H1 (cell line): ENCODE measurements at regions of chr14 and their contacts with region 1.

Region 1: GRCh38 chr14:94548999-94549985 is 11.9 kb upstream of the SERPINA4 start:
- DNase-seq: peak; percentile 80 to 98
- H3K4me3 ChIP-seq: no peak overlapping the region
- H3K27ac ChIP-seq: no peak overlapping the region
- H3K4me1 ChIP-seq: peaks cover 0 to 8% (median 5%) of the 10 kb centered on the region in 4 experiments
- H3K27me3 ChIP-seq: no peaks in the 10 kb centered on the region
- CTCF ChIP-seq: peak; percentile 78 to 90 (median 86)
- EP300 ChIP-seq: no peak
- POLR2A ChIP-seq: no peak
- RAD21 ChIP-seq: peak; percentile 85 to 90

Region 2: DNA sequence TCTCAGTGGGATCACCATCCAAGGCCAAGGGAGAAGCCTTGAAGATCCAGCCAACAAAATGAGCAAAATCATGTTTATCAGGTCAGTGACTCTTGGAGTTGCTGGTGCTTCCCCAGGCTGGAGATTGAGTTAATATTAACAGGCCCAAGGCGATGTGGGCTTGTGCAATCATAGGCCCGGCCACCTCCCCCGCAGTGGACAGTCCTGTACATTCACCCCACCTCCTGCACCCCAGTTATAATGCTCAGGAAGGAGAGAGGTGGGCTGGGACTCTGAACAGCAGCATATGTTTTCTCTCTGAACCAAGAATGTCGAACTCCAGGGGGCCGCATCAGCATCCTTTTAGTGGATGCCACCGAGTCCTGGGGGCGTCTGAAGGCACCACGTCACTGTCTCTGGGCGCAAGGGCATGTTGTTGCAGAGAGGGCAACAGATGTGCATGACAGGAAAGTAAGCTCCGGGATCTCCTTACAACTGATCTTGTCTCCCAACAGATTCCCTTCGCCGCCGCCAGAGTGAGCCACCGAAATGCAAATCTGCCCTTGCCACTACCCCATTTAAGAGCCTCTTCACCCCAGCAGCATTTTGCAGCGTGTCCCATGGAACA is 194.0 kb before region 1 on chr14:
- CTCF ChIA-PET with region 1: interaction called, 14 read pairs
- POLR2A ChIA-PET with region 1: no interaction called
- DNase-seq: peak; percentile 56 to 61
- H3K4me3 ChIP-seq: no peak overlapping the region
- H3K27ac ChIP-seq: no peak overlapping the region
- H3K4me1 ChIP-seq: peaks cover 0 to 8% (median 3%) of the 10 kb centered on the region in 4 experiments; a peak in 1 of 7 replicates
- H3K27me3 ChIP-seq: no peaks in the 10 kb centered on the region
- CTCF ChIP-seq: peak; percentile 74 to 82 (median 75)
- EP300 ChIP-seq: no peak
- POLR2A ChIP-seq: no peak
- RAD21 ChIP-seq: peak; percentile 83 to 87

Region 3: GRCh38 chr14:94439453-94440057 is 109.7 kb before region 1 on chr14:
- CTCF ChIA-PET with region 1: interaction called, 53 read pairs
- POLR2A ChIA-PET with region 1: no interaction called
- DNase-seq: no peak
- H3K4me3 ChIP-seq: no peak overlapping the region
- H3K27ac ChIP-seq: no peak overlapping the region
- H3K4me1 ChIP-seq: no peaks in the 10 kb centered on the region
- H3K27me3 ChIP-seq: no peaks in the 10 kb centered on the region; a peak in 1 of 7 replicates
- CTCF ChIP-seq: peak; percentile 22 to 40 (median 23); a peak in 3 of 4 replicates
- EP300 ChIP-seq: no peak
- POLR2A ChIP-seq: no peak
- RAD21 ChIP-seq: no peak; a peak in 1 of 4 replicates

Region 4: GRCh38 chr14:94559638-94560290 is 10.5 kb after region 1 on chr14:
- CTCF ChIA-PET with region 1: interaction called, 23 read pairs
- POLR2A ChIA-PET with region 1: no interaction called
- DNase-seq: no peak
- H3K4me3 ChIP-seq: no peak overlapping the region
- H3K27ac ChIP-seq: no peak overlapping the region
- H3K4me1 ChIP-seq: no peaks in the 10 kb centered on the region
- H3K27me3 ChIP-seq: no peaks in the 10 kb centered on the region
- CTCF ChIP-seq: no peak
- EP300 ChIP-seq: no peak
- POLR2A ChIP-seq: no peak
- RAD21 ChIP-seq: no peak

Region 5: DNA sequence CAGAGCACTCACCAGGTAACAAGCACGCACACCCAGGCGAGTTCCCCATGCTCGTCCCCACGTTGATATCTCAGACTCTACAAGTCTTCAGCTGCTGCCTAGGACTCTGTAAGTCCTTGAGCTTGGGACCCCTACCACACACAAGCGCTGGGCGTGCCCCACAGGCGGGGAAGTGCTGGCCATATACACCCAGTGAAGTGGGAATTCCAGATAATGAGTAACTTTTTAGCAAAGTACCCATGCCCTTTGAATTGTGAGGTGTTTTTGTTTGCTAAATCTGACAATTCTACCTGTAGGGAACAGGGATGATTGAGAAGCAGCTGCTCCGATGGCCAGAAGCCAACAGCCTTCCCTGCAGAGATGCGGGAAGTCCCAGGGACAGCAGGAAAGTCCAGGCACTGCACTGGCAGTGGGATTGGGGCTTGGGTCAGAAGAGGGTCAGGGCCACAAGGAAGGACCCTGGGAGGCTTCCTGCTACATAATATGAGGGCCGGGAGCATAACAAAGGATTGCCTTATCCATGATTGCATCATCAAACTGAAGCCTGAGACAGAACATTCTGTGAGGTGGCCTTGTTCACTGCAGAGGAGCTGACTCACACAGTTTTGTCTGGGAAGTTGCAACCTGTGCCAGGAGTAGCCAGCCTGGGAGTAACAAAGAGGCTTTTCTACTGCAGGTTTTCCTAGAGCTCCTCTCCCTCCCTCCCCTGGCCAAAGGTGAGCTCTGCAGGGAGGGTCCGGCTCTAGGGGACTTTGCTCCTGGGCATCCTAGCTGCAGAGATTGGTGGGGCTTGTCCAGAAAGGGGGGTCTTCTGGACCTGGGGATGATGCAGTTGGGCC is 49.7 kb after region 1 on chr14:
- CTCF ChIA-PET with region 1: interaction called, 13 read pairs
- POLR2A ChIA-PET with region 1: no interaction called
- DNase-seq: no peak
- H3K4me3 ChIP-seq: no peak overlapping the region
- H3K27ac ChIP-seq: no peak overlapping the region
- H3K4me1 ChIP-seq: peaks cover 0 to 7% (median 4%) of the 10 kb centered on the region in 4 experiments; a peak in 5 of 7 replicates
- H3K27me3 ChIP-seq: no peaks in the 10 kb centered on the region
- CTCF ChIP-seq: peak; percentile 2 to 15 (median 3); a peak in 3 of 4 replicates
- EP300 ChIP-seq: no peak
- POLR2A ChIP-seq: no peak
- RAD21 ChIP-seq: peak in 1 of 2 experiments; percentile 33; a peak in 1 of 4 replicates

Region 6: GRCh38 chr14:94665121-94665520 is 115.8 kb after region 1 on chr14:
- CTCF ChIA-PET with region 1: no interaction called
- POLR2A ChIA-PET with region 1: no interaction called
- DNase-seq: no peak
- H3K4me3 ChIP-seq: no peak overlapping the region
- H3K27ac ChIP-seq: no peak overlapping the region
- H3K4me1 ChIP-seq: no peaks in the 10 kb centered on the region
- H3K27me3 ChIP-seq: no peaks in the 10 kb centered on the region
- CTCF ChIP-seq: no peak
- EP300 ChIP-seq: no peak
- POLR2A ChIP-seq: no peak
- RAD21 ChIP-seq: no peak